ENCODE measurements at regions of chr17 and their contacts with region 1.

Region 1: GRCh38 chr17:57671667-57672632 is 73.1 kb downstream of the CCDC182 start:
- DNase-seq: peak in 1 of 2 donors; percentile 92
- H3K4me3 ChIP-seq: no peak overlapping the region
- CTCF ChIP-seq: no peak
- POLR2A ChIP-seq: no peak

Region 2: DNA sequence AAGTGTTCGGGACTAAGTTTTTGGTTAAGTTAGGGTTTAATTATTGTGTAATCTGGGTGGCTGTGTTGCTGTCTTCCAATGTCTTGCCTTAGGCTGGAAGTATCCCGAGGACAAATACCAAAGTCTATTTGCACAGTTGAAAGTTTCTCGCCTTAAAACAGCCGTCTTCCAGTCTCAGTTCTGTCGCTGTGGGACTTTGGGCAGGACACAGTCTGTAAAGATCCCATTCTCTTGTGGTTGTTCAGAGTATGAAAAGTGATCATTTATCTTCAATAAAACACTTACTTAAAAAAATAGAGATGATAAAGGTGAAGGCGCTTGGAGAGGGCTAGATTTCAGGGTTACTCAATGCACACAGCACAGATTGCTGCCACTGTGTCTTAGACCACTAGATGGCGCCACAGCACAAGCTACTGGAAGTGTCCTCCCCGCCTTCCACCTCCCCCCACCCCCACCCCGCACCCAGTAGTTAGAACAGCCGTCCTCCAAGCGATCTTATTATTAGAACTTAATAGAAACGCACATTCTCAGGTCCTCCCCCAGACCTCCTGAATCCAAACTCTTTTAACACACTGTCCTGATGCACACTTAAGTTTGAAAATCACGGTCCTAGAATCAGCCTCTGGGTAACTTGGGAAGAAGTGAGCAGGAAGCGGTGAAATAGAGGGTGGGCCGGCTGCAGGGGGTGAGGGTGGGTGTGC is 541.0 kb before region 1 on chr17:
- intact Hi-C with region 1: loop called (anchors 10 kb)
- DNase-seq: peak; percentile 84 to 95
- H3K4me3 ChIP-seq: no peak overlapping the region
- CTCF ChIP-seq: no peak
- POLR2A ChIP-seq: no peak

Region 3: GRCh38 chr17:57833179-57833939 is 161.4 kb after region 1 on chr17:
- intact Hi-C with region 1: loop called (anchors 5 kb)
- DNase-seq: peak; percentile 59 to 89
- H3K4me3 ChIP-seq: no peak overlapping the region
- CTCF ChIP-seq: peak in 1 of 3 donors; percentile 31
- POLR2A ChIP-seq: no peak